Sigmoid colon (tissue), 7 donors: ENCODE measurements at regions of chr20 and their contacts with region 1.

Region 1: GRCh38 chr20:12171923-12172534 is 254.3 kb downstream of the BTBD3 start:
- DNase-seq: peak; percentile 67
- H3K4me3 ChIP-seq: no peak overlapping the region
- H3K27ac ChIP-seq: peak overlapping the region in 2 of 4 donors; percentile 35 to 52
- H3K4me1 ChIP-seq: peaks cover 3 to 26% (median 19%) of the 10 kb centered on the region in 4 donors
- H3K27me3 ChIP-seq: no peaks in the 10 kb centered on the region
- CTCF ChIP-seq: no peak
- EP300 ChIP-seq: no peak
- POLR2A ChIP-seq: no peak

Region 2: GRCh38 chr20:12058216-12058615 is 113.8 kb before region 1 on chr20:
- intact Hi-C with region 1: no loop called
- DNase-seq: no peak
- H3K4me3 ChIP-seq: no peak overlapping the region
- H3K27ac ChIP-seq: no peak overlapping the region
- H3K4me1 ChIP-seq: peaks cover 0 to 3% (median 0%) of the 10 kb centered on the region in 4 donors
- H3K27me3 ChIP-seq: no peaks in the 10 kb centered on the region
- CTCF ChIP-seq: no peak
- EP300 ChIP-seq: no peak
- POLR2A ChIP-seq: no peak

Region 3: DNA sequence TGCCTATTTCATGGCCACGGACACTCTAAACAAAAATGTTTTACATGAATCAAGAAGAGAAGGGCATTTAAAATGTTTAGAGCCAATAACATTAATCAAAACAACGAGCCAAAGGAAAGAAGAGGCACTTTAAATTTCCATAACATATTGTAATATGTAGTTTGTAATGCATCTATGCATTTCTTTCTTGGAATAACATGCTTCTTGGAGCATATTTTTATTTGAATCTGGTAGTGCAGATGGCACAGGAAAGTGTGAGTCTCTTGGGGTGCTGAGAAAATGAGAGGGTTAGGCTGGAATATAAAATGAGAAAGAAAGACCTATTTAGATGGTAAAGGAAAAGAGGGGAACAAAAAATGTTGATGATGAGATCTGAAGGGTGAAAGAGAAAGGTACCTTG is 51.0 kb after region 1 on chr20:
- intact Hi-C with region 1: loop called (anchors 5 kb)
- DNase-seq: no peak
- H3K4me3 ChIP-seq: no peak overlapping the region
- H3K27ac ChIP-seq: peak overlapping the region in 1 of 4 donors; percentile 5
- H3K4me1 ChIP-seq: peaks cover 0 to 15% (median 4%) of the 10 kb centered on the region in 4 donors
- H3K27me3 ChIP-seq: no peaks in the 10 kb centered on the region
- CTCF ChIP-seq: no peak
- EP300 ChIP-seq: no peak
- POLR2A ChIP-seq: no peak